ENCODE measurements at regions of chr12 and their contacts with region 1.

Region 1: GRCh38 chr12:64801381-64801780 is 23.1 kb upstream of the TBC1D30 start:
- DNase-seq: no peak
- H3K4me3 Mint-ChIP-seq: no peak overlapping the region
- H3K27ac Mint-ChIP-seq: no peak overlapping the region
- H3K4me1 Mint-ChIP-seq: peaks cover 23% of the 10 kb centered on the region
- H3K27me3 Mint-ChIP-seq: no peaks in the 10 kb centered on the region
- CTCF ChIP-seq: peak; percentile 27

Region 2: GRCh38 chr12:64293654-64294364 is 507.6 kb before region 1 on chr12:
- CTCF ChIA-PET with region 1: no interaction called
- intact Hi-C with region 1: no loop called
- DNase-seq: no peak
- H3K4me3 Mint-ChIP-seq: no peak overlapping the region
- H3K27ac Mint-ChIP-seq: no peak overlapping the region
- H3K4me1 Mint-ChIP-seq: no peaks in the 10 kb centered on the region
- H3K27me3 Mint-ChIP-seq: no peaks in the 10 kb centered on the region
- CTCF ChIP-seq: no peak

Region 3: DNA sequence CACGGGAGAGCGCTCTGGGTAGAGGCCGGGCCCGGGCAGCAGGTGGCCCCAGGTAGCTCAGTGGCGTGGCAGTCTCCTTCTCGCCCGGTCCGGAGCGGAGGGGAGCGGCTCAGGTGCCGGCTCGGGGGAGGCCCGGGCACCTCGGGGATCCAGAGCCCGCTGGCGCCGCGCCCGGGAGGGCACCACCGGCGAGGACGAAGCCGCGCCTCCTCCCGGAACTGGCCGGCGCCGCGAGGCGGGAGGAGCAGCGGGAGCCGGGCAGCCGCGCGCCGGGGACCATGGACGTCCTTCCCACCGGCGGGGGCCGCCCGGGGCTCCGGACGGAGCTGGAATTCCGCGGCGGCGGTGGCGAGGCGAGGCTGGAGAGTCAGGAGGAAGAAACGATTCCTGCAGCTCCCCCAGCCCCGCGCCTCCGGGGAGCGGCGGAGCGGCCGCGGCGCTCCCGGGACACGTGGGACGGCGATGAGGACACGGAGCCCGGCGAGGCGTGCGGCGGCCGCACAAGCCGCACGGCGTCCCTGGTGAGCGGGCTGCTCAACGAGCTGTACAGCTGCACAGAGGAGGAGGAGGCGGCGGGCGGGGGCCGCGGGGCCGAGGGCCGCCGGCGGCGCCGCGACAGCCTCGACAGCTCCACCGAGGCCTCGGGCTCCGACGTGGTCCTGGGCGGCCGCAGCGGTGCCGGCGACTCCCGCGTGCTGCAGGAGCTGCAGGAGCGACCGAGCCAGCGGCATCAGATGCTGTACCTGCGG is 20.7 kb before region 1 on chr12:
- CTCF ChIA-PET with region 1: interaction called, 17 read pairs
- intact Hi-C with region 1: no loop called
- DNase-seq: peak; percentile 83
- H3K4me3 Mint-ChIP-seq: peak overlapping the region; percentile 89
- H3K27ac Mint-ChIP-seq: peak overlapping the region; percentile 76
- H3K4me1 Mint-ChIP-seq: peaks cover 25% of the 10 kb centered on the region
- H3K27me3 Mint-ChIP-seq: no peaks in the 10 kb centered on the region
- CTCF ChIP-seq: no peak

Region 4: DNA sequence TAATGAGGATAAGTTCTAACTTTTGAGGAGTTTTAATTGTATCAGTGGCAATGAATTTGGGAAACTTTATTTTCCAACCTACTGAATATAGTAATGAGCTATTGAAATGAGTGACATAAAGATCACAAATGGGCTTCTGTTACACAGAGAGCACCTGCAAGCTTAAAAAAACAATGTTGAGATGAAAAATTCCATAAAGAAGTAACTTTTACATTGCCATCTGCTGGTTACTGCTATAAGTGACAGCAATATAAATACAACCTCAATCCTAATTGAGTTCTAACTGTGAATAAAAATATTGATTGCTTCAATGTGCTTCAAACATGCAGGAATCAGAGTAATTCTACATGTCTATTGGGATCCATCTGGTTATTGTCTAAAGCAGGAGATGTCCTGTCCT is 305.6 kb after region 1 on chr12:
- CTCF ChIA-PET with region 1: interaction called, 7 read pairs
- intact Hi-C with region 1: loop called (anchors 5 kb)
- DNase-seq: no peak
- H3K4me3 Mint-ChIP-seq: no peak overlapping the region
- H3K27ac Mint-ChIP-seq: no peak overlapping the region
- H3K4me1 Mint-ChIP-seq: no peaks in the 10 kb centered on the region
- H3K27me3 Mint-ChIP-seq: peaks cover 14% of the 10 kb centered on the region
- CTCF ChIP-seq: peak; percentile 46

Region 5: GRCh38 chr12:65152596-65152995 is 351.2 kb after region 1 on chr12:
- CTCF ChIA-PET with region 1: no interaction called
- intact Hi-C with region 1: no loop called
- DNase-seq: no peak
- H3K4me3 Mint-ChIP-seq: no peak overlapping the region
- H3K27ac Mint-ChIP-seq: no peak overlapping the region
- H3K4me1 Mint-ChIP-seq: peaks cover 11% of the 10 kb centered on the region
- H3K27me3 Mint-ChIP-seq: no peaks in the 10 kb centered on the region
- CTCF ChIP-seq: no peak

Measured in Calu3 (cell line).